Vagina (tissue), 2 donors: ENCODE measurements at regions of chr15 and their contacts with region 1.

Region 1: DNA sequence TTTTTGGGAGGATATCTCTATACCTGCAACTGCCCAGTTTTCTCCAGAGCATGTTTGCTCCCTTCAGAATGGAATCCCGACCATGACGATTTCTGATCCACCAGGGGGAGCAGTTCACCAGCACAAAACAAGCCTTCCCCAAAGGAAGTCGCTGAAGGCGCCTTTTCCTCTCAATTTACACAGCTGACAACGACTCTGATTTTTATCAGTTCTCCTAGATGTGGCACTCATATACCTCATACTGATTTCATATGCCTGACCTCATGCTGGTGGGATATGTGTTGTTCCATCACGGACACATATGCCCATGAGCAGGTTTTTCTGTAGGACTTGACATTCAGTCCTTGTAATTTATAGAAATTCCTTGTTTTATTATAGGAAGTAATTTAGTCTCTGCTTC is 1028.2 kb downstream of the MCTP2 start:
- DNase-seq: no peak
- H3K4me3 ChIP-seq: no peak overlapping the region
- H3K27ac ChIP-seq: peak overlapping the region; percentile 12
- H3K4me1 ChIP-seq: peaks cover 27% of the 10 kb centered on the region
- H3K27me3 ChIP-seq: no peaks in the 10 kb centered on the region
- CTCF ChIP-seq: peak; percentile 81 to 87 (median 82)
- POLR2A ChIP-seq: no peak

Region 2: DNA sequence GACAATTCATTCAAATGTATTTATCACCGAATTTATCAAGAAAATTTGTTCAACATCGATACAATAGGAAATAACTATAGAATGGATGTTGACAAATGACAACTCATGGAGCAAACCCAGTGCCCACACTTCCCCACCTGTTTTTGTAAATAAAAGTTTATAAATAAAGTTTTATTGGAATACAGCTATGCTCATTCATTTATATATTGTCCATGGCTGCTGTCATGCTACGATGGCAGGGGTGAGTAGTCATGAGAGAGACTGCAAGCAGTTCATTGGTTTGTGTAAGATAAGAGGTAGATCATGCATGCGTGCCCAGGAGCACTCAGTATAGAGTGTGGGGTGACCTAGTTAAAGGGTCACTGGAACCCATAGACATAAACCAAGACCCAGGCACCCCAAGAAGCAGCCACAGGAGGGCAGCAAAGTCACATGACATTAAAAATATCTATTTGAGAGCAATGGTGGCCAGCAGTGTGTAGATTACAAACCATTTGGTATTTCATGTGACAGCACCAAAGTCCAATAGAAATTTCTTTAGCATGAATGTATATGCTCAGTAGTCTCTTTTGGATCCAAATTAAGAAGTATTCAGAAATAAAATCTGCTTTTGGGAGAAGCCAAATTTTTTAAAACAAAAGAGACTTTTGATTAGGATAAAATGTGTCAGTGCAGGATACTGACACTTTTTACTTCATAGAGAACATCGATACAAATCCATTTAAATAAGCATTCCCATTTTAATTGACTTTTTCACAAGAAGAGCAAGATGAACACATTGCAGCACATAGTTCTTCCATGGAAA is 233.4 kb before region 1 on chr15:
- intact Hi-C with region 1: no loop called
- DNase-seq: no peak
- H3K4me3 ChIP-seq: no peak overlapping the region
- H3K27ac ChIP-seq: no peak overlapping the region
- H3K4me1 ChIP-seq: no peaks in the 10 kb centered on the region
- H3K27me3 ChIP-seq: no peaks in the 10 kb centered on the region
- CTCF ChIP-seq: peak in 2 of 3 experiments; percentile 10 to 34
- POLR2A ChIP-seq: no peak

Region 3: DNA sequence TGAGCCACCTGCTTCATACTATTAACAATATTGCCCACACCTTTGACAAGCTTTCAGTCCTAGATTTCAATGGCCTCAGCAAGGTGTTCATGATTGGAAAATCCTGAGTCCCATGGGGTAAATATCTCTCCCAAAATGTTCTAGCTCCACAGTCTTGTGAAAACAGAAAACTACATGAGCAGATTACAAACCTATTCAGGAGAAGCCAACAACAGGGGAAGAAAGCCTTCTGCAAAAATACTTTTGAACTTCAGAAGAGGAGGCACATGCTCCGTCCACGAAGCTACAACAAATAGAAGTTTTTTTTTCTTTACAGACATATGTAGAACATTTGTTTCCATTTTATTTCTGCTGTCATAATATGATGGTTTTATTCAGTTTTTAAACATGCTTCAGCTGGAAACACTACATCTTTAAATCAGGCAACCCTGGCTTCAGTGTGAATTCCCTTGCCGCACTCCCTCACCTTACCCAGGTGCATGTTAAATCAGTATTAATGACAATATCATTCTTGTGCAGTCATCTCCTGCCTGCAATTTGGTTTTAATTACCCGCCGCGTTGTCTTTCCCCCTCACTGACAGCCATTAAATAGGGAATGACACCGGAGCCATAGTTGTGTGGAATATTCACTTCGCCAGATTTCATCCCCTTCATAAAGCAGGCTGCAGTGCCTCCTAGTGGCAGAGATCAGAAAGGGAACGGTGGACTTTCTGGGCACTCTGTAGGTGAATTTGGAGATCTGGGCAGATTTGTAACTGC is 1975.5 kb after region 1 on chr15:
- intact Hi-C with region 1: loop called (anchors 10 kb)
- DNase-seq: no peak
- H3K4me3 ChIP-seq: no peak overlapping the region
- H3K27ac ChIP-seq: no peak overlapping the region
- H3K4me1 ChIP-seq: no peaks in the 10 kb centered on the region
- H3K27me3 ChIP-seq: no peaks in the 10 kb centered on the region
- CTCF ChIP-seq: peak; percentile 44 to 90 (median 71)
- POLR2A ChIP-seq: no peak